ENCODE measurements at regions of chr19 and their contacts with region 1.

Region 1: DNA sequence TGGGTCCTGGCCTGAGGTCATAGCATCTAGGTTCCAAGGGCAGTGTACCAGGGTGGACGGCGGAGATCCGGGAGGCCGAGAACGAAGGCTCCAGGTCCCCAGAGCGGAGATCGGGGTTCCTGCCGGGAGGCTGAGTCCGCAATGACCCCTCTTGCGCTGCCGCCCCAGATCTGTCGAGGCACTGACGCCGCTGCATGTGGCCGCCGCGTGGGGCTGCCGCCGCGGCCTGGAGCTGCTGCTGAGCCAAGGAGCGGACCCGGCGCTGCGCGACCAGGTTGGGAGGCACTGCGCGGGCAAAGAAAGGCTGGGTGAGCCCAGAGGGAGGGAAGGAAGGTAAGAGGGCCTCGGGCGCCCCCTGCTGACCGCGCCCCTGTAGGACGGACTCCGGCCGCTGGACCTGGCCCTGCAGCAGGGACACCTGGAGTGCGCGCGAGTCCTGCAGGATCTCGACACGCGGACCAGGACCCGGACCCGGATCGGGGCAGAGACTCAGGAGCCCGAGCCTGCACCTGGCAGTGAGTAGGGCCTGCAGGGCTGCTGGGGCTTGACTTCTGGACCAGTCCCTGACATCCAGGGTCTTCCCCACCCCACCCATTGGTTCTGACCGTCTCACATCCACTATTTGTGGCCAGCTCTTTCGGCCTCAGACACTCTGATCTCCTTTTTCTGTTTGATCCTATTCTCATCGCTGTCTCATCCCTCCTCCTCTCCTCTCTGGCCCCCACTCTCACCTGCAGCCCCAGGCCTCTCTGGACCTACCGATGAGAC is 971 bp downstream of the ANKLE1 start:
- DNase-seq: peak; percentile 82
- H3K4me3 ChIP-seq: peak overlapping the region in 2 of 3 experiments; percentile 0 to 29
- H3K27ac ChIP-seq: no peak overlapping the region
- H3K4me1 ChIP-seq: peaks cover 10% of the 10 kb centered on the region
- H3K27me3 ChIP-seq: no peaks in the 10 kb centered on the region
- CTCF ChIP-seq: peak; percentile 96 to 99
- POLR2A ChIP-seq: no peak

Region 2: DNA sequence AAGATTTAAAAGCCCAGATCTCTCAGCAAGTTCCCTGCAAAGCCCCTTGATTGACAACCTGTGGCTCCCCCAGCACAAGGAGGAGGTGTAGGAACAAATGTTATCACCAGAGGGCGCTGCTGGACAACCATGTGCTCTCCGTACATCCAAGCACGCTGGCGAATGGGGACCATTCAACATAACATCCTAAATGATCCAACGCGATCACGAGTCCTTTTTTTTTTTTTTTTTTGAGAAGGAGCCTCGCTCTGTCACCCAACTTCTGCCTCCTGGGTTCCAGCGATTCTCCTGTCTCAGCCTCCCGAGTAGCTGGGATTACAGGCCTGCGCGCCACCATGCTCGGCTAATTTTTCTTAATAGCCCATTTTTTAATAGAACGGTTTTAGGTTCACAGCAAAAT is 511.1 kb before region 1 on chr19:
- CTCF ChIA-PET with region 1: no interaction called
- POLR2A ChIA-PET with region 1: no interaction called
- dilution Hi-C with region 1: no loop called
- intact Hi-C with region 1: loop called (anchors 5 kb)
- DNase-seq: peak; percentile 81
- H3K4me3 ChIP-seq: no peak overlapping the region
- H3K27ac ChIP-seq: no peak overlapping the region
- H3K4me1 ChIP-seq: no peaks in the 10 kb centered on the region
- H3K27me3 ChIP-seq: no peaks in the 10 kb centered on the region
- CTCF ChIP-seq: peak; percentile 73 to 79
- POLR2A ChIP-seq: no peak

Region 3: GRCh38 chr19:17069218-17069617 is 213.5 kb before region 1 on chr19:
- CTCF ChIA-PET with region 1: interaction called, 4 read pairs
- POLR2A ChIA-PET with region 1: no interaction called
- dilution Hi-C with region 1: no loop called
- intact Hi-C with region 1: loop called (anchors 1 kb)
- DNase-seq: no peak
- H3K4me3 ChIP-seq: no peak overlapping the region
- H3K27ac ChIP-seq: no peak overlapping the region
- H3K4me1 ChIP-seq: peaks cover 8% of the 10 kb centered on the region
- H3K27me3 ChIP-seq: no peaks in the 10 kb centered on the region
- CTCF ChIP-seq: no peak
- POLR2A ChIP-seq: no peak

Region 4: GRCh38 chr19:17205237-17206140 is 77.2 kb before region 1 on chr19:
- CTCF ChIA-PET with region 1: interaction called, 10 read pairs
- POLR2A ChIA-PET with region 1: no interaction called
- dilution Hi-C with region 1: no loop called
- intact Hi-C with region 1: loop called (anchors 1 kb)
- DNase-seq: peak; percentile 50
- H3K4me3 ChIP-seq: no peak overlapping the region
- H3K27ac ChIP-seq: no peak overlapping the region
- H3K4me1 ChIP-seq: peaks cover 6% of the 10 kb centered on the region
- H3K27me3 ChIP-seq: no peaks in the 10 kb centered on the region
- CTCF ChIP-seq: peak; percentile 65 to 83
- POLR2A ChIP-seq: no peak

Region 5: GRCh38 chr19:17260842-17261325 is 21.8 kb before region 1 on chr19:
- CTCF ChIA-PET with region 1: interaction called, 27 read pairs
- POLR2A ChIA-PET with region 1: interaction called, 11 read pairs
- dilution Hi-C with region 1: no loop called
- intact Hi-C with region 1: loop called (anchors 1 kb)
- DNase-seq: peak; percentile 74
- H3K4me3 ChIP-seq: no peak overlapping the region
- H3K27ac ChIP-seq: no peak overlapping the region
- H3K4me1 ChIP-seq: peaks cover 13% of the 10 kb centered on the region
- H3K27me3 ChIP-seq: no peaks in the 10 kb centered on the region
- CTCF ChIP-seq: peak; percentile 93 to 97
- POLR2A ChIP-seq: no peak

Region 6: DNA sequence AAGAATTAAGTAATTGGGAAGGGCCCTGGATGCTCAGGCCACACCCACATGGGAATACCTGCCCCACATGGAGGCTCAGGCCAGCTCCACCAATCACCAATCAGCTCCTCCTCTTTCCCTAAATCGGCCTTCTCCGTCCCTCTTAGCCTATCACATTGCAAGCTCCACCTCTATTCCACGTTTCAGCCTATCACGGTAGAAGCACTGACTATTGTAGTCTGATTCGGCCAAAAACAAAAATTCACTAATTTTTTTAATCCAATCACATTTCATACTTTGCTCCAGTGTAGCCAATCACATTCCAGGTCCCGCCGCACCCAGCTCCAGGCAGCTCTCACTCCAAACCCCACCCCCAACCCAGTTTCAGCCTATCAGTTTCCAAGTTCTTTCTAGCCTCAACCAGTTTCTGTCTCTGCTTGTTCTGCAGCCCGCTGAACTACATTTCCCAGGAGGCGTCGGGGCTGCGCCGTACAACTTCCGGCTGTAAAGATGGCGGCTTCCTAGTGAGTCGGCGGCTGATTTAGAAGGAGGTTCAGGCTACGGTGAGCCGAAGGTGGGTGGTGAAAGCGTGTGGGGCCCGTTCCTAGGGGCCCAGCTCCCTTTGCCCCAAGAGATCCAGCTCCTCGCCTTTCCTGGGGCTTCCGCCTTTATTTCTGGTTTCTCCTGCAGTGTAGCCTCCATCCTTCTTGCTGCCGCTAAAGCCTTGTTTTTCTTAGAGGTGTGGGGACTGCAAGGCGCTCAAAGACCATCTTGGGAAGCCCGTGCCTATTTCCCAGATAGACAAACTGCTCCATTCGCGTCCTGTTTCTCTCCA is 15.5 kb before region 1 on chr19 and contains the start of gene BABAM1:
- CTCF ChIA-PET with region 1: interaction called, 15 read pairs
- POLR2A ChIA-PET with region 1: interaction called, 11 read pairs
- dilution Hi-C with region 1: no loop called
- intact Hi-C with region 1: loop called (anchors 1 kb)
- DNase-seq: peak; percentile 99
- H3K4me3 ChIP-seq: peak within 1 kb of the TSS; percentile 95 to 99 (median 99)
- H3K27ac ChIP-seq: peak within 1 kb of the TSS; percentile 56
- H3K4me1 ChIP-seq: peaks cover 18% of the 10 kb centered on the region
- H3K27me3 ChIP-seq: no peaks in the 10 kb centered on the region
- CTCF ChIP-seq: no peak
- POLR2A ChIP-seq: peak; percentile 82
- total RNA-seq, gene BABAM1: 110 and 118 TPM in 2 replicates

Region 7: GRCh38 chr19:17346109-17346671 is 63.5 kb after region 1 on chr19:
- CTCF ChIA-PET with region 1: no interaction called
- POLR2A ChIA-PET with region 1: no interaction called
- dilution Hi-C with region 1: no loop called
- intact Hi-C with region 1: no loop called
- DNase-seq: peak; percentile 62
- H3K4me3 ChIP-seq: no peak overlapping the region
- H3K27ac ChIP-seq: no peak overlapping the region
- H3K4me1 ChIP-seq: peaks cover 25% of the 10 kb centered on the region
- H3K27me3 ChIP-seq: no peaks in the 10 kb centered on the region
- CTCF ChIP-seq: peak; percentile 86 to 96
- POLR2A ChIP-seq: no peak